OCI-LY7 (cell line): ENCODE measurements at regions of chr2 and their contacts with region 1.

Region 1: DNA sequence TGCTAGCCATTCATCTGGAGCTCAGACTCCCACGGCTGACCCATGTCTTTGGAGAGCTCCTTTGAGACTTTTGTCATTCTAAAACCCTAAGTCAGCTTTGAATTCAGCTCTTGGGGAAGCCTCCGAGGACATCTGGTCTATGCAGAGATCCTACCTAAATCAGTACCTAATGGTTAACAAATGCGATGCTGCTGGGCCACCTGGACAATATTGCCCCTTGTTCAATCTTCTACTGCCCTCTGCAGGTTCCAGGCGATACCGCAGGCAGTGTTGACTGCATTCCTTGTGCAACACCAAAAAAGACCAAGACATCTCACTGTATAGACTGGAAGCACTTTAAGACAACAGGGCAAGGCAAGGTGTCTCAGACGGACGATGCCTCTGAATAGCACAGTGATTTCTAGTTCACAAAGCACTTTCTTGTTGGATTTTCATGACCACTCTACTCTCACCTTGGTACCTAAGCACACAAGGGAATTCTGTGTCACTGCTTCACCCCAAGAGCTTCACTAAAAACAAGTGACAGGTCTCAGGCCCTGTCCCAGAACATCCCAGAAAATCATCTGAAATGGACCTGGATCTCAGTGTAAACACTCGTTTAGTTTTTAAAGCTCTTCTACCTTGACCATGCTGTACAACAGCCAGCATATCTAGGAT is 80.9 kb downstream of the XDH start:
- DNase-seq: peak; percentile 85
- H3K4me3 ChIP-seq: no peak overlapping the region
- H3K27ac ChIP-seq: no peak overlapping the region
- H3K4me1 ChIP-seq: peaks cover 9% of the 10 kb centered on the region
- CTCF ChIP-seq: peak; percentile 100

Region 2: GRCh38 chr2:30862054-30862651 is 471.5 kb before region 1 on chr2:
- CTCF ChIA-PET with region 1: interaction called, 3 read pairs
- POLR2A ChIA-PET with region 1: no interaction called
- intact Hi-C with region 1: loop called (anchors 2 kb)
- DNase-seq: peak; percentile 79
- H3K4me3 ChIP-seq: no peak overlapping the region
- H3K27ac ChIP-seq: no peak overlapping the region
- H3K4me1 ChIP-seq: peaks cover 23% of the 10 kb centered on the region
- CTCF ChIP-seq: peak; percentile 88

Region 3: GRCh38 chr2:31170071-31170698 is 163.5 kb before region 1 on chr2:
- CTCF ChIA-PET with region 1: interaction called, 5 read pairs
- POLR2A ChIA-PET with region 1: interaction called, 4 read pairs
- intact Hi-C with region 1: loop called (anchors 1 kb)
- DNase-seq: peak; percentile 78
- H3K4me3 ChIP-seq: no peak overlapping the region
- H3K27ac ChIP-seq: no peak overlapping the region
- H3K4me1 ChIP-seq: peaks cover 27% of the 10 kb centered on the region
- CTCF ChIP-seq: peak; percentile 99

Region 4: DNA sequence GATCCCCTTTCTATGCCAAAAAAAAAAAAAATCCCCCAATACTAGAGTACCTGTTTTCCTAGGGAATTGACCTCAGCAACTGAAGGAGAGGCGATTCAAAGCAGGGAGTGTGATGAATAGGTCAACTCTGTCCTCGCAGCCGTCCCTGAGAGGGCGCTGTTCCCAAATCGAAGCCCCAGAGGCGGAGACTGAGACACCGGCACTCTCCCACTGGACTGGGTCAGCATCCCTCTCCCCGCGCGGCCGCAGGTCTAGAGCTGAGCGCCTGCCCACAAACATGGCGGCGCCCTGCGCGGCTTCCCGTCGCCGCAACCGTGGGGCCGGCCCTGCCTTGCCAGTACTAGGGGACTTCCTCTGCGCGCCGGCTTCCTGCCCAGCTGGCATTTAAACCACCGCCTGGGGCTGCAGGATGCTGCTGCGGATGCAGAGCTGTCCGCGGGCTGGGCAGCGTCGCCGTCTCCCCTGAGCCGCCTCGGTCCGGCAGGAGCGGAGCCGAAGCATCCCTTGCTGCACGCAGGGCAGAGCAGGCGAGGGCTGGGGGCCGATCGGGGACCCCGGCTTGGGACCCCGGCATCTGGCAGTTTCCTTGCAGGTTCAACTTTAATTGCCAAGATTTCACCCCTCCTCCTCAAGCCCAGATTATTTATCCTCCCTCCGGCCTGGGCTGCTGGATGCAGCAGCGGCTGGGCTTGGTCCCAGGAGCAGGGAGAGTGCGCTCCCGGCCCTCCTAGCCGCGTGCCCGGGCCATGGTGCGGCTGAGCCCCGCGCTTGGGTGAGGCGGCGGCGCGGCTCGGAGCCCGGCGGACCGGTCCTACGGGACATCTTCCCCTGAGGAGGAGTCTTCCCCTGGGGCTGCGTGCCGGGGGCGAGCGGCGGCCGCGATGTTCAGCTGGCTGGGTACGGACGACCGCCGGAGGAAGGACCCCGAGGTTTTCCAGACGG is 99.6 kb before region 1 on chr2 and contains the start of gene EHD3:
- CTCF ChIA-PET with region 1: no interaction called
- POLR2A ChIA-PET with region 1: no interaction called
- intact Hi-C with region 1: loop called (anchors 2 kb)
- DNase-seq: peak; percentile 93
- H3K4me3 ChIP-seq: peak within 1 kb of the TSS; percentile 68
- H3K27ac ChIP-seq: no peak within 1 kb of the TSS
- H3K4me1 ChIP-seq: peaks cover 48% of the 10 kb centered on the region
- CTCF ChIP-seq: peak; percentile 69
- total RNA-seq, gene EHD3: 0.73 and 0.98 TPM in 2 replicates

Region 5: DNA sequence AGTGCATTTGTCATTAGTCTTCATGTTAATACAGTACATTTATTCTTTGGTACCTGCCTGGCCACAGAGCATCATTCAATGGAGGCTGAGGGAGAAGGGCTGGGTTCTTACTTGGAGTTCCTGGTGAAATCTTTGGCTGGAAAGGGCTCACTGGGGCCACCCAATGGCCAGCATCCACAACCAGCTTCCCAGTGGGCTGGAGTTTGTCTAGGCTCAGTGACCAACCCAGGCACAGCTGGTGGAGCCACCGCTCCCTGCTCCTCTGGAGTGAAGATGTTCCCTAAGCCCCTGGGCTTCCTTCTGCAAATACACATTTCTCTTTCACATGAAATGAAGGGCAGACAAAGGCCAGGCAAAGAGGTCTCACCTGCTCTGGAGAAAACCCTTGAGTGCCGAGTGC is 65.3 kb before region 1 on chr2:
- CTCF ChIA-PET with region 1: no interaction called
- POLR2A ChIA-PET with region 1: no interaction called
- intact Hi-C with region 1: no loop called
- DNase-seq: no peak
- H3K4me3 ChIP-seq: no peak overlapping the region
- H3K27ac ChIP-seq: no peak overlapping the region
- H3K4me1 ChIP-seq: peaks cover 15% of the 10 kb centered on the region
- CTCF ChIP-seq: peak; percentile 41

Region 6: GRCh38 chr2:31467418-31467817 is 133.8 kb after region 1 on chr2:
- CTCF ChIA-PET with region 1: no interaction called
- POLR2A ChIA-PET with region 1: no interaction called
- intact Hi-C with region 1: no loop called
- DNase-seq: no peak
- H3K4me3 ChIP-seq: no peak overlapping the region
- H3K27ac ChIP-seq: no peak overlapping the region
- H3K4me1 ChIP-seq: no peaks in the 10 kb centered on the region
- CTCF ChIP-seq: no peak